ENCODE measurements at regions of chr1 and their contacts with region 1.

Region 1: GRCh38 chr1:154479764-154480421 is 22.1 kb upstream of the TDRD10 start:
- DNase-seq: peak; percentile 24
- H3K4me3 ChIP-seq: no peak overlapping the region
- H3K27me3 ChIP-seq: no peaks in the 10 kb centered on the region
- CTCF ChIP-seq: peak; percentile 88

Region 2: DNA sequence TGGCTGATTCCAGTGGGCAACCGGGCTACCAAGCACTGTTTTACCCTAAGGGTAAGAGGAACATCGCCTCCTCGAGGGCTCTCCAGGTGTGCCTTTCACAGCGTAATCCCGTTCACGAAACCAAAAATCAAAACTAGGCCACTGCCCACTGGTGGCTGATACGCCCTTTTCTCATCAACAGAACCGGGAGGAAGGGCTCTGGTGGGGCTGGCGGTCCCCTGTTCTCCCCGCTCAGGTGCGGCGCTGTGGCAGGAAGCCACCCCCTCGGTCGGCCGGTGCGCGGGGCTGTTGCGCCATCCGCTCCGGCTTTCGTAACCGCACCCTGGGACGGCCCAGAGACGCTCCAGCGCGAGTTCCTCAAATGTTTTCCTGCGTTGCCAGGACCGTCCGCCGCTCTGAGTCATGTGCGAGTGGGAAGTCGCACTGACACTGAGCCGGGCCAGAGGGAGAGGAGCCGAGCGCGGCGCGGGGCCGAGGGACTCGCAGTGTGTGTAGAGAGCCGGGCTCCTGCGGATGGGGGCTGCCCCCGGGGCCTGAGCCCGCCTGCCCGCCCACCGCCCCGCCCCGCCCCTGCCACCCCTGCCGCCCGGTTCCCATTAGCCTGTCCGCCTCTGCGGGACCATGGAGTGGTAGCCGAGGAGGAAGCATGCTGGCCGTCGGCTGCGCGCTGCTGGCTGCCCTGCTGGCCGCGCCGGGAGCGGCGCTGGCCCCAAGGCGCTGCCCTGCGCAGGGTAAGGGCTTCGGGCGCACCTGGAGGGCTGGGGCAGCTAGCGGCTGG is 74.7 kb before region 1 on chr1 and contains the start of gene IL6R:
- CTCF ChIA-PET with region 1: interaction called, 16 read pairs
- POLR2A ChIA-PET with region 1: no interaction called
- DNase-seq: peak; percentile 57
- H3K4me3 ChIP-seq: peak within 1 kb of the TSS; percentile 79
- H3K27me3 ChIP-seq: peaks cover 7% of the 10 kb centered on the region
- CTCF ChIP-seq: peak; percentile 39
- polyA plus RNA-seq, gene IL6R: 3.2 and 6.8 TPM in 2 replicates

Region 3: GRCh38 chr1:154490317-154490716 is 10.4 kb after region 1 on chr1:
- CTCF ChIA-PET with region 1: interaction called, 14 read pairs
- POLR2A ChIA-PET with region 1: no interaction called
- DNase-seq: no peak
- H3K4me3 ChIP-seq: no peak overlapping the region
- H3K27me3 ChIP-seq: peaks cover 30% of the 10 kb centered on the region
- CTCF ChIP-seq: no peak

Region 4: DNA sequence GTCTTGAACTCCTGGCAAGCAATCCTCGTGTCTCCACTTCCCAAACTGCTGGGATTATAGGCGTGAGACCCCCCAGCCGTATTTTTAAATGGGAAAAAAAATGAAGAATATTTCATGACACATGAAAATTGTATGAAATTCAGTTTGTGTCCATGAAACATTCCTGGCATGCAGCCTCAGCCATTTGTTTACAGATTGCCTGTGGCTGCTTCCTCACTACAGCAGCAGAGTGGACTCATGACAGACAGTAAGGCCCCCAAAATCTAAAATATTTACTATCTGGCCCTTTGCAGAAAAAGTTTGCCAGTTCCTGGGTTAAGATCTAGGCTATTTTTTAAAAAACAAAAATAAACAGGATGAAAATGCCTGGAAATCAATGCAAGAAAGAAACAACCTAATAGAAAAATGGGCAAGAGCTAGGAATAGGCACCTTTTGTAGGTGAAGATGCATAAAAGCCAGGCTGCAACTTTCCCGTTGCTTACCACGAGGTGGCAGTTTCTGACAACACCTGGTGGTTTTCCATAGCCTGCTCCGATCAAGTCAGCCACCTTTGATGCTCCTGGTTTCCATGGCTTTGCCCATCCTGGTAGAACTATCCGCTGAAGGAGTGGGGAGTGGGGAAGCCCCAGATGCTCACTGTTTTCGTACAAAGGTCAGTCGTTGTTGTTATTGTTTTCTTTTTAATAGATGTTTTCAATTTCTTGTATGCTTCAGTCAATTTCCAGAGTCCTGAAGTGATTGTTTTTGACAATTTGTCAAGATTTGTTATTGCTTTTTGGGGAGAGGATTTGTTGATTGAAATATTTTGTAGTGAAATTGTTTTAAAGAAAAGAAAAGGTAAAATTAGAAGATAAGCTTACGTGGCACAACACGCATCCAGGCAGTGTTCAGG is 54.3 kb after region 1 on chr1:
- CTCF ChIA-PET with region 1: interaction called, 12 read pairs
- POLR2A ChIA-PET with region 1: no interaction called
- DNase-seq: no peak
- H3K4me3 ChIP-seq: no peak overlapping the region
- H3K27me3 ChIP-seq: peaks cover 10% of the 10 kb centered on the region
- CTCF ChIP-seq: peak; percentile 45

Region 5: GRCh38 chr1:154546264-154547063 is 66.6 kb after region 1 on chr1:
- CTCF ChIA-PET with region 1: interaction called, 43 read pairs
- POLR2A ChIA-PET with region 1: no interaction called
- DNase-seq: no peak
- H3K4me3 ChIP-seq: no peak overlapping the region
- H3K27me3 ChIP-seq: peaks cover 5% of the 10 kb centered on the region; the same call in 1 of the 2 replicates
- CTCF ChIP-seq: peak; percentile 75

Region 6: DNA sequence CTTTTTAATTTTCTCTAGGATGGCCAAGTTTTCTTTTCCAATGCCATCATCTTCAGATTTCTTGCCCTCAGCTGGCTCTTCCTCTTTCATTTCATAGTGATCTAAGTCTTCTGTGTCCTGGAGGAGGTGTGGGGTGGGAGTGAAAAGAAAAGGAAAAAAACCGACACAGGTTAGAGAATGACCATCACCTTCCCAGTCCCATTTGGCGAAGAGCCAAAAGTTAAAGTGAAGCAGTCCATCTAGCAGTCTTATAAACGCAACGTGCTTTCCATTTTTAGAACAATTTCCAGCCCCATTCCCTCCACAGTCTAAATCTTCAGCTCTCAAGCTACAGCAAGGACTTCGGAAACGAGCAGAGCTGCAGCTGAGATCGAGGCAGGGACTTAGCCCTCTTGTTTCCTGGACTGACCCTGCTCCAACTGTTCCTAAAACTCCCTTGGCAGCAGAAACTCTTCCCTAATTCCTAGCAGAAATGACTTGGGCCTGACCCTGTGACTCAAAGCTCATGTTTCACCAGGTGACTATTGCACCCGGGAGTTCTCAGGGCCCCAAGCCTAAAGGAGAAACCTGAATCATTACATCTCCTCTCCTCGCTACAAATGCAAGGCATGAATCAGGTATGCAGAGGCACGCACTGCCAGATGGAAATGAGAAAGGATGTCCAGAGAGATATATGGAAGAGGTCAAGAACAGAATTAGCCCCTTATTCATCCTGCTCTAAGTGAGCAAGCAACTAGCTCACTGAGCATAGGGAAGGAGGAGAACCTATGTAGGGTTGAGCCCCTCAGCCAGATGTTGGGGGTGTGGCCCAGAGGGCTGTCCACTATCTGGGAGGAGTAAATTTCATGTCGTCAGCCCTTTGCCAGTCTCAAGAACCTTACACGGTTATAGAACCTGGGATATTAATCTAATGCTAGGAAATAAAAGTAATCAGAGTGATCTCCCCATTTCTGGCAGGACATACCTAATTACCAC is 73.5 kb after region 1 on chr1:
- CTCF ChIA-PET with region 1: interaction called, 43 read pairs
- POLR2A ChIA-PET with region 1: no interaction called
- DNase-seq: no peak
- H3K4me3 ChIP-seq: no peak overlapping the region
- H3K27me3 ChIP-seq: no peaks in the 10 kb centered on the region
- CTCF ChIP-seq: no peak

Region 7: GRCh38 chr1:154574716-154575115 is 94.8 kb after region 1 on chr1:
- CTCF ChIA-PET with region 1: no interaction called
- POLR2A ChIA-PET with region 1: no interaction called
- DNase-seq: no peak
- H3K4me3 ChIP-seq: no peak overlapping the region
- H3K27me3 ChIP-seq: peaks cover 2% of the 10 kb centered on the region; the same call in 1 of the 2 replicates
- CTCF ChIP-seq: no peak

Region 8: GRCh38 chr1:154878371-154879022 is 398.6 kb after region 1 on chr1:
- CTCF ChIA-PET with region 1: interaction called, 31 read pairs
- POLR2A ChIA-PET with region 1: no interaction called
- DNase-seq: no peak
- H3K4me3 ChIP-seq: no peak overlapping the region
- H3K27me3 ChIP-seq: peaks cover 7% of the 10 kb centered on the region
- CTCF ChIP-seq: peak; percentile 87

Measured in BJ (cell line).